ENCODE measurements at regions of chr6 and their contacts with region 1.

Region 1: GRCh38 chr6:31114970-31115849 is 610 bp downstream of the PSORS1C1 start:
- DNase-seq: peak; percentile 81
- H3K4me3 Mint-ChIP-seq: peak overlapping the region; percentile 79
- H3K27ac Mint-ChIP-seq: peak overlapping the region; percentile 98
- H3K4me1 Mint-ChIP-seq: peaks cover 21% of the 10 kb centered on the region
- H3K27me3 Mint-ChIP-seq: no peaks in the 10 kb centered on the region
- CTCF ChIP-seq: peak; percentile 33

Region 2: DNA sequence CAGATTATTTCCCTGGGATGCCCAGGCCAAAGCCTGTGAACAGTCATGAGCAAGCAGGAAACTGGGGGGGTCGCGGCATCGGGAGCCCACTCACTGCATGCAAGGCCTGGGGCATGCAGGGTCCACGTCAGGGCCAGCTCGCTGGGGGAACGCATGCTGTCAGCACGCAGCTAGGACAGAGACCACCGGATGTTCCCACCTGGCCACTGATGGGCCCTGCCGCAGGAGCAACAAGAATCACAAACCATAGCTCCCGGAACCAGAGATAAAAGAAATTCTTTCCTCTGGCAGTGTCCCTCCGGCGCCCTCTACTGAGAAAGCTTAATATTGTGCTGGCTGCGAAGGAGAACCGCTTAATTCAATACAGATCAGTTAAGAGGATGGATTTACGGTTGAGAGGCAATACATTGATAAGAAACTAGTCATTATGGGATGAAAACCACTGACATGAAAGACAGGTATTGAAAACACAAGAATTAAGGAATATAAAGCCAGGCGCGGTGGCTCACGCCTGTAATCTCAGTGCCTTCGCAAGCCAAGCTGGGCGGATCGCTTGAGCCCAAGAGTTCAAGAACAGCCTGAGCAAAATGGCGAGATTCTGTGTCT is 35.5 kb before region 1 on chr6:
- CTCF ChIA-PET with region 1: interaction called, 55 read pairs
- POLR2A ChIA-PET with region 1: interaction called, 30 read pairs
- intact Hi-C with region 1: no loop called
- DNase-seq: peak; percentile 69
- H3K4me3 Mint-ChIP-seq: no peak overlapping the region
- H3K27ac Mint-ChIP-seq: no peak overlapping the region
- H3K4me1 Mint-ChIP-seq: peaks cover 16% of the 10 kb centered on the region
- H3K27me3 Mint-ChIP-seq: no peaks in the 10 kb centered on the region
- CTCF ChIP-seq: peak; percentile 62

Region 3: GRCh38 chr6:31087494-31088089 is 27.6 kb before region 1 on chr6:
- CTCF ChIA-PET with region 1: interaction called, 55 read pairs
- POLR2A ChIA-PET with region 1: interaction called, 30 read pairs
- intact Hi-C with region 1: loop called (anchors 2 kb)
- DNase-seq: peak; percentile 91
- H3K4me3 Mint-ChIP-seq: no peak overlapping the region
- H3K27ac Mint-ChIP-seq: peak overlapping the region; percentile 16
- H3K4me1 Mint-ChIP-seq: peaks cover 21% of the 10 kb centered on the region
- H3K27me3 Mint-ChIP-seq: no peaks in the 10 kb centered on the region
- CTCF ChIP-seq: peak; percentile 65

Region 4: DNA sequence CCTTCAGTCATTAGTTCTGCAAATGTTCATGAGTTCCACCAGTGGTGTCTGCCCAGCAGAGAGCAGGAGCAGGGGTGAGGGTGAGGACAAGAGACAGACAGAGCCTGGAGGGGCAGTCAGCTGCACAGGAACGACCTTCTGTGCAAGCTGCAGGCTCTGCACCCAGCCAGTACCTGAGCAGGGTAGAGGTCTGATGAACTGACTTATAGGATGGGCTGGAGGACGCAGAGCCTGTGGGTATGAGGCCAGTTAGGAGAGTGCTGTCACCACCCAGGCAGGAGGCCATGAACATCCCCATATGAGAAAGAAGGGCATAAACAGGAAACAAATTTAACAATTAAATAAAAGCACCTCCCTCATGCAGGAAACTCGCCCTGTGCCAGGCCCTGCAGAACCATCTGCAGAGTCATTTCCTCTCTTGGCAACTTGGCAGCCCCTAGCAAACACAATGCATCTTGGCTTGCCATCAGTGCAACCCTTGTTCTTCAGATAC is 20.8 kb before region 1 on chr6:
- CTCF ChIA-PET with region 1: interaction called, 7 read pairs
- POLR2A ChIA-PET with region 1: interaction called, 10 read pairs
- intact Hi-C with region 1: no loop called
- DNase-seq: peak; percentile 64
- H3K4me3 Mint-ChIP-seq: no peak overlapping the region
- H3K27ac Mint-ChIP-seq: no peak overlapping the region
- H3K4me1 Mint-ChIP-seq: peaks cover 14% of the 10 kb centered on the region
- H3K27me3 Mint-ChIP-seq: no peaks in the 10 kb centered on the region
- CTCF ChIP-seq: no peak

Region 5: GRCh38 chr6:31103136-31103535 is 12.1 kb before region 1 on chr6:
- CTCF ChIA-PET with region 1: interaction called, 7 read pairs
- POLR2A ChIA-PET with region 1: interaction called, 10 read pairs
- intact Hi-C with region 1: no loop called
- DNase-seq: no peak
- H3K4me3 Mint-ChIP-seq: no peak overlapping the region
- H3K27ac Mint-ChIP-seq: no peak overlapping the region
- H3K4me1 Mint-ChIP-seq: peaks cover 7% of the 10 kb centered on the region
- H3K27me3 Mint-ChIP-seq: no peaks in the 10 kb centered on the region
- CTCF ChIP-seq: no peak